ENCODE measurements at regions of chr13 and their contacts with region 1.

Region 1: GRCh38 chr13:38518328-38518727 is 168.5 kb upstream of the FREM2 start:
- H3K4me3 Mint-ChIP-seq: no peak overlapping the region
- H3K27ac Mint-ChIP-seq: no peak overlapping the region
- H3K4me1 Mint-ChIP-seq: no peaks in the 10 kb centered on the region
- H3K27me3 Mint-ChIP-seq: no peaks in the 10 kb centered on the region

Region 2: GRCh38 chr13:37960427-37960826 is 557.9 kb before region 1 on chr13:
- intact Hi-C with region 1: loop called (anchors 10 kb)
- H3K4me3 Mint-ChIP-seq: no peak overlapping the region
- H3K27ac Mint-ChIP-seq: no peak overlapping the region
- H3K4me1 Mint-ChIP-seq: no peaks in the 10 kb centered on the region
- H3K27me3 Mint-ChIP-seq: no peaks in the 10 kb centered on the region

Region 3: DNA sequence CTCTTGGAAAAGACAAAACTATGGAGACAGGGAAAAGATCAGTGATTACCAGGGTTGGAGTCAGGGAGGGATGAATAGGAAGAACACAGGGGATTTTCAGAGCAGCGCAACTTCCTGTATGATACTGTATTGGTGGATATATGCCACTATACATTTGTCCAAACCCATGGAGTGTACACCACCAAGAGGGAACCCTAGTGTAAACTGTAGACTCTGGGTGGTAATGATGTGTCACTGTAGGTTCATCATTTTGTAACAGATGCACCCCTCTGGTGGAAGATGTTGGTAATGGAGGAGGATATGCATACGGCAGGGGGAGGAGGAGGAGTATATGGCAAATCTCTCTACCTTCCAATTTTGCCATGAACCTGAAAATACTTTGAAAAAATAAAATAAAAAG is 100.6 kb before region 1 on chr13:
- intact Hi-C with region 1: no loop called
- H3K4me3 Mint-ChIP-seq: no peak overlapping the region
- H3K27ac Mint-ChIP-seq: no peak overlapping the region
- H3K4me1 Mint-ChIP-seq: no peaks in the 10 kb centered on the region
- H3K27me3 Mint-ChIP-seq: no peaks in the 10 kb centered on the region

Region 4: DNA sequence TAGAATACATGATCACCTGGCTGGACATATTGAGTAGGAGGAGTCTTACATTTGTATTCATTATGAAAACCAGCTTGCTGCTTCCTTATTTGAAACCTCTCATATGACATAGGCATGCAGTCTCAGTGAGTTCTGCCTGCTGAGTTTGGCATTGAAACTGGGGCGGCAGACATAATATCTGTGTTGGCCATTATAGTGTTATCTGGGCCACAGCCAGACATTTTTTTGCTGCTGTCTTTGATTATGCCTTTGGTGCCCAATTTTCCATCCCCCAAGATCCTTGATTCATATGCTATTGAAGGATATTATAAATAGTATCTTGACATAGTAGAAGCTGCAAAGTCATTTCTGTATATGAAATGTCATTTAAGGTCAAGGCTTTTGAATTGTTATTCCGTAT is 184.3 kb after region 1 on chr13:
- intact Hi-C with region 1: no loop called
- H3K4me3 Mint-ChIP-seq: no peak overlapping the region
- H3K27ac Mint-ChIP-seq: no peak overlapping the region
- H3K4me1 Mint-ChIP-seq: no peaks in the 10 kb centered on the region
- H3K27me3 Mint-ChIP-seq: no peaks in the 10 kb centered on the region

Measured in dendritic cell treated with granulocyte-macrophage colony-stimulating factor and Interleukin-4, amounts not matched to agents 40 ng/mL and 50 ng/mL, for 4 days (primary cell).